Dorsolateral prefrontal cortex (tissue), 120 donors: ENCODE measurements at regions of chr20 and their contacts with region 1.

Region 1: GRCh38 chr20:31368301-31368700 is at the start of gene DEFB118:
- DNase-seq: no peak
- H3K4me3 ChIP-seq: no peak within 1 kb of the TSS
- H3K27ac ChIP-seq: no peak within 1 kb of the TSS
- H3K27me3 ChIP-seq: peaks cover 0 to 23% (median 2%) of the 10 kb centered on the region in 45 donors
- CTCF ChIP-seq: no peak
- total RNA-seq, gene DEFB118: not detected

Region 2: DNA sequence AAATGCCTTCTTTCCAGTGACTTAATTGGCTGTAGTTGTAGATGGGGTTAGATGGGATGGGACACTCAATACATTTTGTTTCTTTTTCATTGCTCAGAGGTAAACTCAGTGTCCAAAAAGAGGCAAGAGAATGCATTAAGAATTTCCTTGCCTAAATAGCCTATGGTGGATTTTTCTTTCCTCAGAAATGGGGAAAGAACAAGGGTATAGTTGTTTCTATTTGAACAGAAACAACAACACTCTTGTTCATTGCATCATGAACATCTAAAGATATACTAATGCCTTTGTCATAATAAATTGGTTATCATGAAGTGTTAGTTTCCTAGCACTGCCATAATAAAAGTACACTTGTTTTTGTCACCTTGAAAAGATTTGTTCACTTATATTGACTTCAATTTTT is 57.5 kb after region 1 on chr20:
- intact Hi-C with region 1: loop called in 1 of 2 experiments (anchors 10 kb)
- DNase-seq: no peak
- H3K4me3 ChIP-seq: no peak overlapping the region
- H3K27ac ChIP-seq: no peak overlapping the region
- H3K27me3 ChIP-seq: peaks cover 0 to 12% (median 0%) of the 10 kb centered on the region in 45 donors
- CTCF ChIP-seq: no peak

Region 3: GRCh38 chr20:32344835-32345506 is 976.7 kb after region 1 on chr20:
- intact Hi-C with region 1: no loop called
- DNase-seq: peak in 1 of 10 donors; percentile 36
- H3K4me3 ChIP-seq: no peak overlapping the region
- H3K27ac ChIP-seq: peak overlapping the region in 1 of 59 donors; percentile 19
- H3K27me3 ChIP-seq: no peaks in the 10 kb centered on the region
- CTCF ChIP-seq: no peak